ENCODE measurements at regions of chr2 and their contacts with region 1.

Region 1: DNA sequence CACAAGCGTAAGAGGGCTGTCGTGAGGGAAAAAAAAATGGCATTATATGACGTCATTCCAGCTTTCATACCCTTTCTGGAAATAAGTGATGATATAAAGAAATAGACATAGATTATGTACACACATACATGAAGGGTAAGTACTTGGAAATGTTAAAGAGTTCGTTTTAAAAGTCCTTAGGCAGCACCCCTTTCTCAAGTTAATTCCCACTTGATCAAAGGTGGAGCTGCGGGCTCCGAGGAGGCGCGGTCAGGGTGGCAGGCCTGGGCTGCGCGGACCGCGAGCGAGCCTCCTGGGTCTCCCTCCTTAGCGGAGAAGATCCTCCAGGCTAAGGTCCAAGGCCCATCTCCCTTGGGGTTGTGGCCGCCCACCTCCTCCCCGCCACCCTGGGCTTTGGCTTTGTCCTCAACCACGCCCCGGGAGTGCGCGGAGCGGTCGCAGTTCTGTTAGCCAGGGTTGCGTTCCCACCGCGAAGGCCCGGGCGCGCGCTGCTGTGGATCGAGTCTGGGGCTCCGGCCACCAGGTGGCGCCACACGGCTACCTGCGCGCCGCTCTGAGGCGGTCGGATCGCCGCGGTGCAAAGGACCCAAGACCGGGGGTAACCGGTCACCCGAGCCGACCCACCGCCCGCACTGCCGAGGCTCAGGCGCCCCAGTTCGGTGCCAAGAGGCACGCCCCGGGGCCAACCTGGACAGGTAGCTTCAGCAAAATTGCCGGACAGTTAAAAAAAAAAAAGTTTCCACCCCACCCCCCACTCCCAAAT is 66.8 kb downstream of the HNRNPLL start:
- DNase-seq: peak; percentile 67
- ATAC-seq: peak; percentile 86
- H3K4me3 ChIP-seq: peak overlapping the region; percentile 65 to 78 (median 67)
- H3K27ac ChIP-seq: no peak overlapping the region
- H3K4me1 ChIP-seq: peaks cover 55% of the 10 kb centered on the region
- H3K27me3 ChIP-seq: 0 out of 5 replicates have a peak, but pooled peaks cover 0 to 1% of the 10 kb centered on the region in 2 experiments
- CTCF ChIP-seq: peak; percentile 100
- EP300 ChIP-seq: no peak
- POLR2A ChIP-seq: no peak
- RAD21 ChIP-seq: peak; percentile 98

Region 2: GRCh38 chr2:38734299-38735058 is 198.6 kb after region 1 on chr2:
- CTCF ChIA-PET with region 1: interaction called, 17 read pairs
- POLR2A ChIA-PET with region 1: no interaction called
- in situ Hi-C with region 1: loop called (anchors 5 kb)
- intact Hi-C with region 1: no loop called
- DNase-seq: no peak
- ATAC-seq: no peak
- H3K4me3 ChIP-seq: no peak overlapping the region
- H3K27ac ChIP-seq: peak overlapping the region; percentile 40
- H3K4me1 ChIP-seq: peaks cover 66% of the 10 kb centered on the region
- H3K27me3 ChIP-seq: no peaks in the 10 kb centered on the region
- CTCF ChIP-seq: no peak
- EP300 ChIP-seq: no peak
- POLR2A ChIP-seq: no peak
- RAD21 ChIP-seq: no peak